ENCODE measurements at regions of chr2 and their contacts with region 1.

Region 1: DNA sequence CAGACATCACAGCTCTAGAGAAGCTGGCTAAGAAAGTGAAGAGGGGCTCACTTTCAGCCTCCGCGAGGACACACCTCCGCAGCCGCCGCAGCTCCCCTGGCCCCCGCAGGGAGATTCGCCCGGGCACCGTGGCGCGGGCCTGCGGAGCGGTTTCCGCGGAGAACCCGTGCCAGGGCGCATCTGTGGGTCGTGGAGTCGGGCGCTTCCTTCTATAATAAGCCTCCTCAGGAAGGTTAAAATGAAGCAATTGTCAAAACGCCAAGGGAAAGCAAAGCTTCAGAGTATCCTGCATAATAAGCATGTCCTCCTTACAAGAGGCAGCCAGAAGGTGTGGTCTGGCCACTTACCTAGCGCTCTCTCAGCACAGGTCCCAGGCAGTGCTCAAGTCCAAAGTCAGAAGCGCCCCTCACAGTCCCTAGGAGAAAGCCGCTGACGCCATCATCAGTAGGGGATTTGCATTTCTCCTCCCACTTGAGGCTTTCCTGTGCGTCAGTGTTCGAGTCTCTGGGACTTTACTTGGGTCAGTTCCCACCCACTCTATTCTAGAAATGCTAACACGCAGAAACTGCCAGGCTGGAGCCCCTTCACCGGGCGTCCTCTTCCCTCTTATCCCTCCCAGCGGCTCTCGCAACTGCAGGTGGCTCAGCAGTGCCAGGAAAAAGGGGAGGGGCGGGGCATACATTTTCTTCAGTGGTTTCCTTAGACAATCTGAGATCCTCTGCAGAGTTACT is at the start of gene STAT4:
- DNase-seq: peak; percentile 76
- H3K4me3 Mint-ChIP-seq: peak within 1 kb of the TSS; percentile 95
- H3K27ac Mint-ChIP-seq: peak within 1 kb of the TSS; percentile 96
- H3K4me1 Mint-ChIP-seq: peaks cover 71% of the 10 kb centered on the region
- H3K27me3 Mint-ChIP-seq: no peaks in the 10 kb centered on the region
- total RNA-seq, gene STAT4: 92.2 and 96.9 TPM in 2 replicates

Region 2: DNA sequence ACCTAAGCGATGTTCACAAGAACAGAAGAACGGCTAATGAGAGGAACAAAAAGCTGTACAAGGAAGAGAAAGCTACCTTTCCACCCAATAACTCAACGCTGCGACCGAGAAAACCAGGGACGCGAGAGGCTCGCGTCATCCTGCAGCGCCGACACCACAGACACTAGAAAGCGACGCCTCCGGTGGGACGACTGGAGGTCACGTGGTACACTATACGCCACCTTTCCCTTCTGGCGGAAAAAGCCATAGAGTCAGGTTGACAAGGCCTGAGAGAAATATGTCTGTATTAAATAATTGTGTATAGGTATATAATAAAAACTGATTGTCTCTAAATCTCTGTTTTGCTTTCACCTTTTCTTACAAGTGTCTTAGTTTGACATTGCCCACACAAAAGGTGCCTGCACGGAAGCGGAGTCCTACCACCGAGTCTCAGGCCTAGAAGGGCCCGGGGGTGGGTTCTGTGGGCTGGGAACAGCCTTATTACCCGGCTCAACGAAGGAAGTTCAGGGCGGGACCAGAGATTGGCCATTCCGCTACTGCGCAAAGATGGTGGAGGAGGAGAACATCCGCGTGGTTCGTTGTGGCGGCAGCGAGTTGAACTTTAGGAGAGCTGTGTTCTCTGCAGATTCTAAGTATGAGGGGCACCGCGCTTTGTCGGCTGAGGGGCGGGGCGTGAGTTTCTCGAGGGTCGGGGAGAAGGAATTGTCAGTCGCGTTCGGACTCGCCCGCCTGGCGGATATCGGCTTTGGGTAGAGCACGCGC is 1709.6 kb before region 1 on chr2 and contains the start of gene WDR75:
- intact Hi-C with region 1: loop called (anchors 5 kb)
- DNase-seq: peak; percentile 87
- H3K4me3 Mint-ChIP-seq: no peak within 1 kb of the TSS
- H3K27ac Mint-ChIP-seq: peak within 1 kb of the TSS; percentile 100
- H3K4me1 Mint-ChIP-seq: peaks cover 17% of the 10 kb centered on the region
- H3K27me3 Mint-ChIP-seq: peaks cover 8% of the 10 kb centered on the region
- total RNA-seq, gene WDR75: 90.7 and 94.4 TPM in 2 replicates

Region 3: DNA sequence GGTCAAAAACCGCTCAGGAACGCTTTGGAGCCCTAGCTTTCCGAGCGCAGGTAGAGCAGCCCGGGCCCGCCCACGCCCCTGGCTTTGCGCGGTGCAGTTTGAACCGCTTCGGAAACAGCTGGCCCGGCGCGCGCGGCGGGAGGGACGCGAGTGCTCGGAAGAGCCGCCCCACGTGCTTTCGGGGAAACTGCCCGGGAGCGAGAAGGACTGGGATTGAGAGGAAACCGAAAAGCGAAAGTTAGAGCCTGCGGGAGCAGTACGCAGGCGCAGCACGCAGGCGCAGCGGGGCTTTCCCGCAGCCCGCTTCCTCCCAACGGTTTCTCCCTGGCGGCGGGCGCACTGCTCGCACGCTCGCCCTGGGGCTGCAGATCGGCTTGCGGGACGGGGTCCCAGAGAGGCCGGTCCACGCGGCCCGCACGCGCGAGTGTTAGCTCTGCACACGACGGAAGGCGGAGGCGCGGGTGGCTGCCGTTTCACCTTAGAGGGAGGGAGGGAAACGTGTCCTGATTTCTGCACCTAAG is 130.5 kb before region 1 on chr2:
- intact Hi-C with region 1: loop called (anchors 1 kb)
- DNase-seq: peak; percentile 96
- H3K4me3 Mint-ChIP-seq: no peak overlapping the region
- H3K27ac Mint-ChIP-seq: no peak overlapping the region
- H3K4me1 Mint-ChIP-seq: peaks cover 35% of the 10 kb centered on the region
- H3K27me3 Mint-ChIP-seq: no peaks in the 10 kb centered on the region

Region 4: GRCh38 chr2:191066197-191066918 is 84.4 kb before region 1 on chr2:
- intact Hi-C with region 1: loop called (anchors 1 kb)
- DNase-seq: no peak
- H3K4me3 Mint-ChIP-seq: peak overlapping the region; percentile 76
- H3K27ac Mint-ChIP-seq: peak overlapping the region; percentile 80
- H3K4me1 Mint-ChIP-seq: peaks cover 74% of the 10 kb centered on the region
- H3K27me3 Mint-ChIP-seq: no peaks in the 10 kb centered on the region

Region 5: DNA sequence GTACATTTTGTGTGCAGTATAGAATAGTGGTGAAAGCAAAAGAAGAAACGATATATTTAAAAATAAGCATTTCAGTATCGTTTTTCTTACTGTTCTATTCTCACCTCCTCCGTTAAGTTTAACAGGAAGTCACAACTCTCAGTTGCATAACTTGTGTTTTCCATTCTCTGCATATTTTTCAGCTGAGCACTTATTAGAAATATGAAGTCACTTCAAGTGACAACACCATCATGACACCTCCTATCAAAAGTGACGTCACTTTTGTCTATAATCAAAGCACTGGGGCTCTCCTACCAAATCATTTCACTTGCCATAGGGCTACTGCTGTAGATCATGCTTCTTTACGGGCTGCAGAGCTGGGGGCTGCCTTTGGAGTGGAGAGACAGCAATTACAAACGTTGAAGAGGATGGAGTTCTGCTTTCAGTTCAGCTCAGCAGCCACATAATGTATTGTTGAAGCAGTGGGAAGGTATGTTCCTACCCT is 36.3 kb before region 1 on chr2:
- intact Hi-C with region 1: loop called (anchors 1 kb)
- DNase-seq: peak; percentile 40
- H3K4me3 Mint-ChIP-seq: peak overlapping the region; percentile 64
- H3K27ac Mint-ChIP-seq: peak overlapping the region; percentile 94
- H3K4me1 Mint-ChIP-seq: peaks cover 76% of the 10 kb centered on the region
- H3K27me3 Mint-ChIP-seq: no peaks in the 10 kb centered on the region

Region 6: DNA sequence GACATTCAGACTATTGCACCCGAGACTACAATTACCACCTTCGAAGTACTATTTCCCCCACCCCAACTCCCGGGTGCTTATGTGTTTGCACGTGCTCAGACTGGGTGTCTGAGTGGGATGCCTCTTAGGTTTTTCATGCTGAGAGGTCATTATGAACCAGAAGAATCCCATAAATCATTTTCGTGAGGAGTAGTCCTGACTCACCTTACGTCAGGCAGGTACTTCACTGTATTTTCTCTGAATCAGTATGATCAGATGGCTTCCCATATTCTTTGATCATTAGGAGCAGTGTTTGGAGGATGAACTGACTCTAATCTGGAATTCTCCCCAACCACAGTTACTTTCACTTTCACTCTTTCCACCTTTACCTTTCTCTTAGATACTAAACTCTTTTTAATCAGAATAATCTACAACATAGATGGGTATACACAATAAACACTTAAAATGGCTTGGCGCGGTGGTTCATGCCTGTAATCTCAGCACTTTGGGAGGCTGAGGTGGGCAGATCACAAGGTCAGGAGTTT is 38.4 kb after region 1 on chr2:
- intact Hi-C with region 1: loop called (anchors 1 kb)
- DNase-seq: no peak
- H3K4me3 Mint-ChIP-seq: peak overlapping the region; percentile 1
- H3K27ac Mint-ChIP-seq: no peak overlapping the region
- H3K4me1 Mint-ChIP-seq: peaks cover 40% of the 10 kb centered on the region
- H3K27me3 Mint-ChIP-seq: no peaks in the 10 kb centered on the region